Gastrocnemius medialis (tissue), 4 donors: ENCODE measurements at regions of chr12 and their contacts with region 1.

Region 1: DNA sequence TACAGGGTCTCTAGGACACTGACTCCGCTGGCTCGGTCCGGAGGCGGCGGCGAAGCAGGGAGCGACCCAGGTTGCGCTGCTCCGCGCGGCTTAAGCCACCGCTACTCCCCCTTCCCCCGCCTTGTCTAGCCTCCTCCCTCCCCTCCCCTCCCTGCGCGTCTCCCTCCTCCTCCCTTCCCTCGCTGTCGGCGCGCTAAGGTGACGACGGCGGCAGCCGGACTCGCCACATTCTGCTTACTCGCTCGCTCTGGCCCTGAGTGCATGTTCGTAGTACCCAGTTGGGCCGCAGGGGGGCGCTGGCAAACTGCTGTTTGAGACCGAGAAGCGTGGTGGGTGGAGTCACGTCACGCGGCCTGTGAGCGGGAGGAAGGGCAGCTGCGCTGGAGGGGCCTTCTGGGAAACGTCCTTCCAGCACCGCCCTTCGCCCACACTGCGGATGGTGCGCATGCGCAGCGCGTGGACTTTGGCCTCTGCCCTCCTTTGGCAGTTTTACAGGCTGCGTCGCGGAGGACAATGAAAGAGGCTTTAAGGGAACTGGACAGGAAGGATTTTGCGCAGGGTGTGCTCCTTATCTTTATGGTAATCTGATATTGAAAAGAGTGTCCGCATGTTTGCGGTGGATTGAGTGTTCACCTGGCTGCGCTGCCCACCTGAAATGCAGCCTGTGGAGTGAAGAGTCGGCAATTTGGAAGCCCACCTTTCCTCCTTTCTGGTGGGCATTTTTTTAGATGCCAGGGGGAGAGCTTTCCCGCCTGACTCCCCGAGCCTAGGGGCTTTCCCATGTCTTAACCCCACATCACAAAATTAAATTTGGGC is at the start of gene SCAF11:
- DNase-seq: peak; percentile 100
- ATAC-seq: peak; percentile 79 to 87
- H3K4me3 ChIP-seq: peak within 1 kb of the TSS; percentile 90 to 99 (median 90)
- H3K27ac ChIP-seq: peak within 1 kb of the TSS; percentile 99 to 100 (median 100)
- H3K4me1 ChIP-seq: peaks cover 39 to 41% of the 10 kb centered on the region in 2 donors
- H3K27me3 ChIP-seq: no peaks in the 10 kb centered on the region
- CTCF ChIP-seq: peak; percentile 97 to 100 (median 99)
- POLR2A ChIP-seq: peak; percentile 92 to 93
- total RNA-seq, gene SCAF11: 69.9 to 101 (median 97.7) TPM

Region 2: GRCh38 chr12:45234139-45234846 is 756.4 kb before region 1 on chr12:
- in situ Hi-C with region 1: no loop called
- intact Hi-C with region 1: loop called (anchors 10 kb)
- DNase-seq: peak in 1 of 2 donors; percentile 42
- ATAC-seq: peak; percentile 65 to 76
- H3K4me3 ChIP-seq: peak overlapping the region; percentile 5 to 21 (median 18)
- H3K27ac ChIP-seq: peak overlapping the region; percentile 90 to 97 (median 93)
- H3K4me1 ChIP-seq: peaks cover 57 to 62% of the 10 kb centered on the region in 2 donors
- H3K27me3 ChIP-seq: no peaks in the 10 kb centered on the region
- CTCF ChIP-seq: no peak
- POLR2A ChIP-seq: no peak

Region 3: DNA sequence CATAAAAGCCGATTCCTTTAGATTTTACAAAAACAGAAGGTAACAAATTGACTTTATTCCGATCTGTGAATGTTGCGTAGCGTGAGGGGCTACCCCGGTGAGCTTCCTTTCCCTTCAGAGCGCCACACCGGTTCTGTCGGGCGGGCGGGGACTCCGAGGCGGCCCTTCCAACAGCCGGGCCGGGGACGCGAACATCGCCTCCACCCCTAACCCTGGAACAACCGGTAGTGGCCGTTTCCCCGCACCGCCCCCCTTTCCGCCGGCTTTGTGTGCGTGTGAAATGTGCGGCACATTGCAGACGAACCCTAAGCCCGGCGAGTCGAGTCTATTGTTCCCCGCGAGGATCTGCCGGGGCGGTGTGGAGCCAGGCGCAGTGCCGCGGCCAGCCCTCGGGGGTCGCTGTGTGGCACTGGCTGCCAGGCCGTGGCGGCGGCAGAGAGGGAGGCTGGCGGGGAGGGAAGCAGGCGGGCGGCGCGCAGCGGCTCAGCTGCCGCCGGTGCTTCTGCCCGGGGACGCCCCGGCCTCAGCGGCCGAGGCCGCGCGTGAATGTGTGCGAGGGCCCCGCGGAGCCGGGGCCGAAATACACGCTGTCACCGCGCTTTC is 261.9 kb before region 1 on chr12:
- in situ Hi-C with region 1: loop called in 1 of 4 experiments (anchors 10 kb)
- intact Hi-C with region 1: loop called (anchors 1 kb)
- DNase-seq: peak; percentile 88 to 94
- ATAC-seq: peak; percentile 55 to 58
- H3K4me3 ChIP-seq: peak overlapping the region; percentile 81 to 91 (median 84)
- H3K27ac ChIP-seq: peak overlapping the region; percentile 98 to 100 (median 98)
- H3K4me1 ChIP-seq: peaks cover 46 to 47% of the 10 kb centered on the region in 2 donors
- H3K27me3 ChIP-seq: no peaks in the 10 kb centered on the region
- CTCF ChIP-seq: peak; percentile 91 to 99 (median 98)
- POLR2A ChIP-seq: peak; percentile 81 to 89

Region 4: GRCh38 chr12:46108721-46109120 is 118.0 kb after region 1 on chr12:
- in situ Hi-C with region 1: no loop called
- intact Hi-C with region 1: no loop called
- DNase-seq: no peak
- ATAC-seq: no peak
- H3K4me3 ChIP-seq: no peak overlapping the region
- H3K27ac ChIP-seq: no peak overlapping the region
- H3K4me1 ChIP-seq: no peaks in the 10 kb centered on the region
- H3K27me3 ChIP-seq: no peaks in the 10 kb centered on the region
- CTCF ChIP-seq: no peak
- POLR2A ChIP-seq: no peak

Region 5: GRCh38 chr12:46124848-46125619 is 134.4 kb after region 1 on chr12:
- in situ Hi-C with region 1: no loop called
- intact Hi-C with region 1: loop called (anchors 10 kb)
- DNase-seq: peak in 1 of 2 donors; percentile 41
- ATAC-seq: peak; percentile 88 to 94
- H3K4me3 ChIP-seq: peak overlapping the region in 1 of 4 donors; percentile 18
- H3K27ac ChIP-seq: no peak overlapping the region
- H3K4me1 ChIP-seq: no peaks in the 10 kb centered on the region
- H3K27me3 ChIP-seq: no peaks in the 10 kb centered on the region
- CTCF ChIP-seq: peak; percentile 59 to 85 (median 65)
- POLR2A ChIP-seq: no peak

Region 6: GRCh38 chr12:46372544-46373110 is 382.0 kb after region 1 on chr12 and contains the start of gene SLC38A2:
- in situ Hi-C with region 1: loop called in 1 of 4 experiments (anchors 25 kb)
- intact Hi-C with region 1: loop called (anchors 5 kb)
- DNase-seq: peak; percentile 97 to 98
- ATAC-seq: peak; percentile 69 to 71
- H3K4me3 ChIP-seq: peak within 1 kb of the TSS; percentile 68 to 87 (median 80)
- H3K27ac ChIP-seq: peak within 1 kb of the TSS; percentile 93 to 97 (median 95)
- H3K4me1 ChIP-seq: peaks cover 38 to 46% of the 10 kb centered on the region in 2 donors
- H3K27me3 ChIP-seq: no peaks in the 10 kb centered on the region
- CTCF ChIP-seq: no peak
- POLR2A ChIP-seq: peak; percentile 100
- total RNA-seq, gene SLC38A2: 260 to 853 (median 400) TPM

Region 7: GRCh38 chr12:46675736-46676135 is 685.1 kb after region 1 on chr12:
- in situ Hi-C with region 1: loop called in 3 of 4 experiments (anchors 25 kb)
- intact Hi-C with region 1: no loop called
- DNase-seq: no peak
- ATAC-seq: no peak
- H3K4me3 ChIP-seq: no peak overlapping the region
- H3K27ac ChIP-seq: no peak overlapping the region
- H3K4me1 ChIP-seq: peaks cover 27 to 38% of the 10 kb centered on the region in 2 donors
- H3K27me3 ChIP-seq: no peaks in the 10 kb centered on the region
- CTCF ChIP-seq: peak; percentile 60 to 77 (median 72)
- POLR2A ChIP-seq: no peak